CD14-positive monocyte (primary cell): ENCODE measurements at regions of chr6 and their contacts with region 1.

Region 1: GRCh38 chr6:10534419-10534762 is 13.2 kb downstream of the GCNT2 start:
- DNase-seq: peak in 1 of 3 donors; percentile 16
- H3K4me3 ChIP-seq: peak overlapping the region in 1 of 3 experiments; percentile 87
- H3K4me3 Mint-ChIP-seq: peak overlapping the region; percentile 16 to 74
- H3K27ac ChIP-seq: peak overlapping the region; percentile 81 to 86
- H3K27ac Mint-ChIP-seq: peak overlapping the region; percentile 85 to 98 (median 96)
- H3K4me1 ChIP-seq: peaks cover 79 to 87% of the 10 kb centered on the region in 2 donors
- H3K4me1 Mint-ChIP-seq: peaks cover 83% of the 10 kb centered on the region
- H3K27me3 ChIP-seq: no peaks in the 10 kb centered on the region
- H3K27me3 Mint-ChIP-seq: no peaks in the 10 kb centered on the region
- CTCF ChIP-seq: no peak

Region 2: GRCh38 chr6:10434692-10435376 is 99.6 kb before region 1 on chr6:
- intact Hi-C with region 1: no loop called
- DNase-seq: peak in 1 of 3 donors; percentile 31
- H3K4me3 ChIP-seq: no peak overlapping the region
- H3K4me3 Mint-ChIP-seq: no peak overlapping the region
- H3K27ac ChIP-seq: no peak overlapping the region
- H3K27ac Mint-ChIP-seq: no peak overlapping the region
- H3K4me1 ChIP-seq: peaks cover 5 to 8% of the 10 kb centered on the region in 2 donors
- H3K4me1 Mint-ChIP-seq: peaks cover 13% of the 10 kb centered on the region
- H3K27me3 ChIP-seq: peaks cover 2 to 11% of the 10 kb centered on the region in 2 donors
- H3K27me3 Mint-ChIP-seq: peaks cover 9 to 21% (median 10%) of the 10 kb centered on the region in 3 donors
- CTCF ChIP-seq: peak; percentile 78

Region 3: DNA sequence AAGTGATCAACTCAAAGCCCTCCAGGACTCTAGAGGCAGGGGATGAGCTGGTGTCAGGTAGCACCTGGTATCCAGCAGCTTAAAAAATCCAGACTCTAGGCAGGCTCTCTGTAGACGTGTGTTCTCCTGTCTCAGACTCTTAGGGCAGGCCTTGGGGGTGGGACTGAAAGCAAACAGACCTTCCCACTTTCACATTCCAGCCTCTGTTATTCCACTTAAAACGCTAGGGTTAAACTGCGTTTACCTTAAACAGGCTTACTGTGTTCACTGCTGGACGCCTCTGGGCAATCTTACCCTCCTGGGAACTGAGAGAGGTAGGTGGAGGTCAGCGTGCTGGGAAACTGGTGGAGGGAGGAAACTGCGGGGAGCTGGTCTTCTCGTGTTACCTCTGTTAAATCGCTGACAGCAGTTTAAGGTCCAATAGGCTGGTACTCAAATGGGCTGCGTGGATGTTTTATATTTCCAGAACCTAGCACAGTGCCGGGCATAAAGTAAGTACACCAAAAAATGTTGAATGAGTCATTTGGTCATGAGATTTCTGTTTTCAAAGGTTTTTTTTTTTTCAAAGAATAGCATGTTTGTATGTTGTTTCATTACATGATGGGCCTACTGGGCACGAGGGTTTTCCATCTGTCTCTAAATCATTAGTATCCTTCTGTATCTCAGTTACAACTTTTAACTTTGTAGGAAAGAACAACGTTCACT is 13.1 kb before region 1 on chr6 and contains the start of gene GCNT2:
- intact Hi-C with region 1: loop called in 1 of 2 experiments (anchors 2 kb)
- DNase-seq: peak; percentile 32 to 69 (median 58)
- H3K4me3 ChIP-seq: peak within 1 kb of the TSS in 2 of 3 experiments; percentile 32 to 64
- H3K4me3 Mint-ChIP-seq: peak within 1 kb of the TSS; percentile 70 to 81
- H3K27ac ChIP-seq: peak within 1 kb of the TSS; percentile 81 to 84
- H3K27ac Mint-ChIP-seq: peak within 1 kb of the TSS; percentile 92 to 99 (median 94)
- H3K4me1 ChIP-seq: peaks cover 53 to 69% of the 10 kb centered on the region in 2 donors
- H3K4me1 Mint-ChIP-seq: peaks cover 58% of the 10 kb centered on the region
- H3K27me3 ChIP-seq: no peaks in the 10 kb centered on the region
- H3K27me3 Mint-ChIP-seq: peaks cover 0 to 2% (median 0%) of the 10 kb centered on the region in 3 donors
- CTCF ChIP-seq: no peak
- polyA plus RNA-seq, gene GCNT2: 3.5 to 10.0 (median 4.3) TPM

Region 4: GRCh38 chr6:10595731-10596664 is 61.6 kb after region 1 on chr6:
- intact Hi-C with region 1: loop called in 1 of 2 experiments (anchors 10 kb)
- DNase-seq: peak; percentile 74 to 90 (median 88)
- H3K4me3 ChIP-seq: no peak overlapping the region
- H3K4me3 Mint-ChIP-seq: peak overlapping the region in 1 of 2 donors; percentile 53
- H3K27ac ChIP-seq: peak overlapping the region; percentile 86 to 88
- H3K27ac Mint-ChIP-seq: peak overlapping the region; percentile 93 to 99 (median 97)
- H3K4me1 ChIP-seq: peaks cover 54 to 70% of the 10 kb centered on the region in 2 donors
- H3K4me1 Mint-ChIP-seq: peaks cover 63% of the 10 kb centered on the region
- H3K27me3 ChIP-seq: no peaks in the 10 kb centered on the region
- H3K27me3 Mint-ChIP-seq: peaks cover 0 to 1% (median 0%) of the 10 kb centered on the region in 3 donors
- CTCF ChIP-seq: no peak

Region 5: DNA sequence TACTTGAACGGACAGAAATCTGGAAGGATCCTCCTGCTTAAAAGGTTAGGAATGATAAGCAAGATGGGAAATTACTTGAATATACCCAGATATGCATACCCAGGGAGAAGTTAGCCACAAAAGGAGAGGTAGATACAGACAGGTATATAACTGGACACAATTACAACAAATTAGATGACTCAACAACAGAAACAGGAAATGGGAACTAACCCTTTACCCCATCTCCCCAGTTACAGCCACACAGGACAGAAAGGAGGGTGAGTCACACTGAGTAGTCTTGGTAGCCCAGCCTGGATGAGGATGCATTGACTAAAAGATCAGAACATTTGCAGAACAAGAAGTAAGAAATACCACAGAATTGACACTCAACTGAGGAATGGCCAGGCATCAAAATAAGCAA is 98.8 kb after region 1 on chr6:
- intact Hi-C with region 1: loop called (anchors 5 to 10 kb)
- DNase-seq: peak; percentile 88 to 97 (median 95)
- H3K4me3 ChIP-seq: no peak overlapping the region
- H3K4me3 Mint-ChIP-seq: no peak overlapping the region
- H3K27ac ChIP-seq: peak overlapping the region in 1 of 2 donors; percentile 73
- H3K27ac Mint-ChIP-seq: peak overlapping the region; percentile 16 to 86 (median 77)
- H3K4me1 ChIP-seq: peaks cover 23 to 27% of the 10 kb centered on the region in 2 donors
- H3K4me1 Mint-ChIP-seq: peaks cover 23% of the 10 kb centered on the region
- H3K27me3 ChIP-seq: no peaks in the 10 kb centered on the region
- H3K27me3 Mint-ChIP-seq: no peaks in the 10 kb centered on the region
- CTCF ChIP-seq: no peak